ENCODE measurements at regions of chr7 and their contacts with region 1.

Region 1: GRCh38 chr7:1579481-1580421 is 9.9 kb upstream of the PSMG3 start:
- DNase-seq: peak in 2 of 3 donors; percentile 73 to 80
- ATAC-seq: peak; percentile 97
- H3K4me3 ChIP-seq: no peak overlapping the region
- H3K4me1 ChIP-seq: no peaks in the 10 kb centered on the region
- CTCF ChIP-seq: peak; percentile 65

Region 2: DNA sequence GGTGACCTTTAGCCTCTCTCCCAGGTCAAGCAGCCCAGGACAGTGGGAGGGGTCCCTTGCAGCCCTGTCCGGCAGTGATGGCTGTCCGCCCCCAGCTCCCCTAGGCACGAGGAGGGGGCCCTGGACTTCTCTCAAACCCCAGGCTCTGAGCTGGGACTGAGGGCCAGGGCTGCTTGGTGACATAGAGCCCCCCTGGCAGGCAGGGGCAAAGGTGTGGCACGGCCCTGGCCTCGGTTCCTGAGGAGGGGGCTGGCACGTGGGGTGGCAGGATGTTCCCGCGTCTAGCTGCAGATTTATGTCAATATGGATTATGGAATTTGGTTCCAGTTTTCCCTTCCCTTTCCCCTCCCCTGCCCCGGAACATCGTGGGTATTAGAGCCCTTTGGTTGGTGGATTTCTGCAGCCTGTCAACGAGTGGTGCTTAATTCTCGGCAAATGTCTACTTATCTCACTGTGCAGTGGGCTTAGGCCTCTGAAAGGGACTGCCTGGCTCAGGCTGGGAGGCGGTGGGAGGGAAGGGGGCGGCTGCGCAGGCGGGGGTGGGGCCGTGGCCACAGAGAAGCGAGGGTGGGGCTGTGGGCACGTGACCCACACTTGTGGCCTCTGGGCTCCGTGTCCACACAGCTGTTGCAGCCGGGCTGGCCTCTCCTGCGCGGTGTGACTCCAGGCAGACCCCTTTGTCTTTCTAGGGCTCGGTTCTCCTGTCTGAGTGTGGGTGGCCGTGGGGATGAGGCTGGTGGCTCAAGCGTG is 327.8 kb before region 1 on chr7:
- intact Hi-C with region 1: no loop called
- DNase-seq: peak in 1 of 3 donors; percentile 44
- ATAC-seq: peak; percentile 39
- H3K4me3 ChIP-seq: no peak overlapping the region
- H3K4me1 ChIP-seq: no peaks in the 10 kb centered on the region
- CTCF ChIP-seq: no peak

Region 3: DNA sequence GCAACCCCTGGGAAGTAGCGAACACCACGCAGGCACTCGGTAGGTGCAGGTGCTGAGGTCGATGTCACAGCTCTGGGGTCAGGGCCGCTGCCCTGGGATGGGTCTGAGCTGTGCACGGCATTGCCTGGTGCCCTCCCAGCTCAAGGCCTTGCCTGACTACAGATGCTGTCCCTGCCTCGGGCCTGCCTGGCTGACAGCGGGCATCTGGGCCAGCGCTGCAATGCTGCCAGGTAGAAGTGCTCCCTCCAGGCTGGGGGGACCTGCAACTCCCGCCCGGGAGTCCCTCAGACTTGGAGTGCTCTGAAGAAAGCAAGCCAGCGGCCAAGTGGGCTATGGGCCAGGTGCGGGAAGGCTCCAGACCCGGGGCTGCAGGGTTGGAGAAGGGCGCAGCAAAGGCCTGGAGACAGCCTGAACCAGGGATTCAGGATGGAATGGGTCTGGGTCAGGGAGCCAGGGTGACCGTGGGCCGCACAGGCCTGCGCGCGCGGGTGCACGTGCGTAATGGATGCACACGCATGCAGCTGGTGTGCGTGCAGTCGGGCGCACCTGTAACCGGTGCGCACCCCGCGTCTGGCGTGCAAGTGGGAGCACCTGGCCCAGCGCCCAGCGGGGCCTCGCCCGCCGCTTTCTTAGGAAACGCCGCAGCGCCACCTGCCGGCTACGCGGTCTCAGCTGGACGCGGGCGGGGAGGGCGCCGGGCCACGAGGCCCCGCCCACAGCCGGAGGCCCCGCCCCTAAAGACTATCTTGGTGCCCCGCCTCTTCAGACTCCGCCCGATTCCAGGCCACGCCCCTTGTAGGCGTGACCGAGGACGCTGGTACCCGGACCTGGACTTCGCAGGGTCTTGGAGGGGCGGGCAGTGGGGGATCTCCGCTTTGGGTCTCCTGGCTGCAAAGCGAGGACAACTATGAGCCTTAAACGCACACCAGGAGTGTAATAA is 167.2 kb before region 1 on chr7:
- intact Hi-C with region 1: no loop called
- DNase-seq: peak; percentile 88 to 95 (median 93)
- ATAC-seq: peak; percentile 99
- H3K4me3 ChIP-seq: no peak overlapping the region
- H3K4me1 ChIP-seq: peaks cover 7% of the 10 kb centered on the region
- CTCF ChIP-seq: peak; percentile 64

Region 4: DNA sequence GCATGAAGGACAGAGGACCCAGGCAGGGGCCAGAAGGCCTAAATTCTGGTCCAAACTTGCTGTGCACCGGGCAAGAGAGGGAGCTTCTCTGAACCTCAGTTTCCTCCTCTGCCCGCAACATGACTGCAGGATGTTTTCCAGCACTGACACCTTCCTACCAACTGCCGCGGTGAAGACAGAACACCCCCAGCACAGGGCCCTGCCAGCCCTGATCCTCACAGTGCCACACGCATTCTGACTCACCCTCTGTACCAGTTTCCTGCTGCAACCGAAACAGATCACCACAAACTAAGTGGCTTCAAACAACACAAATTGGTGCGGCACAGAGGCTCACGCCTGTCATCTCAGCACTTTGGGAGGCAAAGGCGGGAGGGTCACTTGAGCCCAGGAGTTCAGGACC is 634.9 kb after region 1 on chr7:
- intact Hi-C with region 1: loop called in 1 of 2 experiments (anchors 5 kb)
- DNase-seq: no peak
- ATAC-seq: no peak
- H3K4me3 ChIP-seq: no peak overlapping the region
- H3K4me1 ChIP-seq: no peaks in the 10 kb centered on the region
- CTCF ChIP-seq: no peak